B cell (primary cell): ENCODE measurements at regions of chr6 and their contacts with region 1.

Region 1: GRCh38 chr6:135183532-135184440 is 2.7 kb downstream of the MYB start:
- DNase-seq: peak; percentile 78
- ATAC-seq: peak; percentile 37
- H3K4me3 ChIP-seq: peak overlapping the region; percentile 47 to 74 (median 67)
- H3K4me3 Mint-ChIP-seq: peak overlapping the region; percentile 86
- H3K27ac ChIP-seq: no peak overlapping the region
- H3K27ac Mint-ChIP-seq: peak overlapping the region; percentile 44
- H3K4me1 ChIP-seq: peaks cover 14 to 28% of the 10 kb centered on the region in 2 donors
- H3K4me1 Mint-ChIP-seq: peaks cover 20% of the 10 kb centered on the region
- H3K27me3 ChIP-seq: peaks cover 0 to 17% (median 1%) of the 10 kb centered on the region in 4 experiments
- H3K27me3 Mint-ChIP-seq: peaks cover 6% of the 10 kb centered on the region
- CTCF ChIP-seq: peak; percentile 62

Region 2: DNA sequence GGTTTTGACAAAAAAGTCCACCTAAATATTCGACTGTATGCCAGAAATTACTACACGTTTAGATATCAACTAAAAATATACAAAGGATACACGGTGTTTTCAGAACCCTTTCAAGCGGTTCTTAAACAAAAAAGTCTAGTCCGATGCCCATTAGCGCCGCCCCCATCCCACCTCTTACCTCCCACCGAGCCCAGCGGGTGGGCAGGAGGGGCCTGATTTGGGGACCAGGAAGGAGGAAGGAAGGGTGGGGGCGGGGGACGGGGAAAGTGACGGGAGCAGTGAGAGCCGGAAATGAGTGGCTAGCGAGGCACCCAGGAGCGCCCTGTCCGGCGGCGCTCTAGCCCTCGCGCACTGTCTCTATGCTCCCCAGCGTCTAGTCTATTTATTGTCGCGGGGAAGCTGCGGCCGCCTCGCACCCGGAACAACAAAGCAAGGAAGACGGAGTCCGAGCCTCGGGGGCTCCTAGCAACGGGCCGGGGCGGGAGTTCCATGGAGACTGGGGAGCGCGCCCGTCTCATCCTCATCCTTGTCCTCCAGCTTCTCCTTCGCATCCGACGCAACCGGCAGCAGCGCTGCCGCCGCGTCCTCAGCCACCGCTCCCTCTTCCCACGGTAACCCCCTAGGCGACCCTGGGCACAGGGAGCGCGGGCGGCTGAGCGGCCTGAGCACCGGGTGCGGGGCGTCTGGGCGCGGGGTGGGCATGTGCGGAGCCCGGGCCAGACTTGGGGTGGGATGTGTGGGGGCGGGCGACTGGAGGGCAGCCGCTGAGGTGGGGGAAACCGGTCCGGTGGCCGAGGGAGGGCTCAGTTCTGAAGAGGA is 1230.8 kb before region 1 on chr6 and contains the start of gene TBPL1:
- CTCF ChIA-PET with region 1: no interaction called
- POLR2A ChIA-PET with region 1: no interaction called
- intact Hi-C with region 1: loop called (anchors 5 kb)
- DNase-seq: peak; percentile 97
- ATAC-seq: peak; percentile 78
- H3K4me3 ChIP-seq: peak within 1 kb of the TSS; percentile 78 to 98 (median 94)
- H3K4me3 Mint-ChIP-seq: peak within 1 kb of the TSS; percentile 98
- H3K27ac ChIP-seq: peak within 1 kb of the TSS; percentile 83 to 89
- H3K27ac Mint-ChIP-seq: peak within 1 kb of the TSS; percentile 97
- H3K4me1 ChIP-seq: peaks cover 20 to 27% of the 10 kb centered on the region in 2 donors
- H3K4me1 Mint-ChIP-seq: peaks cover 48% of the 10 kb centered on the region
- H3K27me3 ChIP-seq: no peaks in the 10 kb centered on the region
- H3K27me3 Mint-ChIP-seq: no peaks in the 10 kb centered on the region
- CTCF ChIP-seq: no peak
- total RNA-seq, gene TBPL1: 26.9 and 29.6 TPM in 2 replicates

Region 3: DNA sequence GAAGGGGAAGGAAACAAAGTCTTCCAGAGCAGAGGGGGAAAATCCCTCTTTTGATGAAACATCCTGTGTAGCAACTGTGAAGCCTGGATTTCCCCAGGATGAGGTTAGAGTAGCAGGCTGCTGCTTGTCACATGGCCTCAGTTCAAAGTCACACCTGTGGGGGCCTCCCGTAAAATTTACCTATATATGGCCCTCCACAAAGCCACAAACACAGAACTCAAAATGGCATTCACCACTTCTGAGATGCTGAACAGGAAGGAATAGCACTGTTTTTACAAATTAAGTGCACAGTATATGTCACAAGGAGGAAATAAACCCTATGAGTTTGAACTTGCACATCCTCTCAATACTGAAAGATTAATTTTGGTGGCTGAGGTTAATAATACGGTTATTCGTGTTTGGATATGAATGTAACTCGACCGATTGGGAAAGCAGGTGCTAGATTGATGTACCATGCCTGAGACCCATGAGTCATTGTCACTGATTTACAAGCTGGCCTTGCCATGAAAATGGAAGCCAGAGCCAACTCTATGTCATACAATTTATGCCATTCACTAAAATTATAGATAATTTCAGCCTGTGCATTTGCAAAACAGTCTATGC is 936.5 kb before region 1 on chr6:
- CTCF ChIA-PET with region 1: no interaction called
- POLR2A ChIA-PET with region 1: no interaction called
- intact Hi-C with region 1: loop called (anchors 10 kb)
- DNase-seq: peak; percentile 94
- ATAC-seq: peak; percentile 80
- H3K4me3 ChIP-seq: peak overlapping the region in 1 of 5 experiments; percentile 41
- H3K4me3 Mint-ChIP-seq: peak overlapping the region; percentile 38
- H3K27ac ChIP-seq: peak overlapping the region; percentile 80 to 87
- H3K27ac Mint-ChIP-seq: peak overlapping the region; percentile 87
- H3K4me1 ChIP-seq: peaks cover 47 to 48% of the 10 kb centered on the region in 2 donors
- H3K4me1 Mint-ChIP-seq: peaks cover 41% of the 10 kb centered on the region
- H3K27me3 ChIP-seq: no peaks in the 10 kb centered on the region
- H3K27me3 Mint-ChIP-seq: no peaks in the 10 kb centered on the region
- CTCF ChIP-seq: no peak

Region 4: GRCh38 chr6:135145063-135145800 is 38.6 kb before region 1 on chr6:
- CTCF ChIA-PET with region 1: interaction called, 34 read pairs
- POLR2A ChIA-PET with region 1: no interaction called
- intact Hi-C with region 1: loop called (anchors 1 kb)
- DNase-seq: peak; percentile 48
- ATAC-seq: peak; percentile 53
- H3K4me3 ChIP-seq: peak overlapping the region in 3 of 5 experiments; percentile 20 to 37 (median 25)
- H3K4me3 Mint-ChIP-seq: peak overlapping the region; percentile 58
- H3K27ac ChIP-seq: no peak overlapping the region
- H3K27ac Mint-ChIP-seq: no peak overlapping the region
- H3K4me1 ChIP-seq: peaks cover 14 to 25% of the 10 kb centered on the region in 2 donors
- H3K4me1 Mint-ChIP-seq: peaks cover 39% of the 10 kb centered on the region
- H3K27me3 ChIP-seq: no peaks in the 10 kb centered on the region
- H3K27me3 Mint-ChIP-seq: no peaks in the 10 kb centered on the region
- CTCF ChIP-seq: peak; percentile 78

Region 5: GRCh38 chr6:135170849-135171248 is 12.9 kb before region 1 on chr6:
- CTCF ChIA-PET with region 1: interaction called, 4 read pairs
- POLR2A ChIA-PET with region 1: no interaction called
- intact Hi-C with region 1: loop called (anchors 1 kb)
- DNase-seq: no peak
- ATAC-seq: no peak
- H3K4me3 ChIP-seq: no peak overlapping the region
- H3K4me3 Mint-ChIP-seq: no peak overlapping the region
- H3K27ac ChIP-seq: no peak overlapping the region
- H3K27ac Mint-ChIP-seq: no peak overlapping the region
- H3K4me1 ChIP-seq: no peaks in the 10 kb centered on the region
- H3K4me1 Mint-ChIP-seq: no peaks in the 10 kb centered on the region
- H3K27me3 ChIP-seq: peaks cover 0 to 2% (median 0%) of the 10 kb centered on the region in 4 experiments
- H3K27me3 Mint-ChIP-seq: no peaks in the 10 kb centered on the region
- CTCF ChIP-seq: no peak

Region 6: DNA sequence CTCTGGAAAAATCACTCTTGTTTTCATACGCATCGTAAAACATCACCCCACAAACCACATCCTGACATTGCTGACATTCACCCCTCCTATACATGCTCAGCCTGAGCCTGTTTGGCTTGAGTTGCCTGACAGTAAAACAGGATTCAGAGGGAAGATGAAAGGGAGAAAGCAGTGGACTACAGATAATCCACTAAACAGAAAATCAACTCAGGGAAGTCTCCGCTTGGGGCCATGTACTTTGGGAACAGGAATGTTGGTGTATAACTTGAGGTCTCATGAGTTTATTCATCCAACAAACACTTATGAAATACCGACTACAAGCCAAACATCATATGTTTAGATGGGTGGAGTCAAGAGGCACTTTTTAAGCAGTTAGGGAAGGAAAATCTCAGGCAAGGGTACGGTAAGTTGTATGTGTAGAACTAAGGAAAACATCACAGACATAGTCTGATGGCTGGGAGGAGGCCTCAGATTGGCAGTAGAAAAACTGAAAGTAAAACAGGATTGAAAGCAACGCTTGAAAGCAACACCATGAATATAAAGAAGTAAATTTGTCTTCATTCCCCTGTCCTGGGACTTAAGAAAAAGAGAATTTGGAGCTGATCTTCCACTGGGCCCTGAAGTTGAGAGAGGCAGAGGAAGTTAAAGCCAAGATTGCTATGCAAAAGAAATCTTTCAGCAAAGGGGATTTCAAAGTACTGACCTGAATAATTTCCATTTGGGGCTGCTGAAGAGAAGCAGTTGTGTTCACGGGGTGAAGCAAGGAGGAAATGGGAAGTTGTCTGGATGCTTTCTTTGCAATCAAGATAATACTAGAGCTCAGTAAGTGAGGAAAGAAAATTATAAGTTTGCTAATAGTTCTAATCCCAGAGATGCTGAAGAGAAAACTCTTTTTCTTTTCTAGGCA is 696.5 kb after region 1 on chr6:
- CTCF ChIA-PET with region 1: no interaction called
- POLR2A ChIA-PET with region 1: no interaction called
- intact Hi-C with region 1: loop called (anchors 10 kb)
- DNase-seq: peak; percentile 75
- ATAC-seq: peak; percentile 90
- H3K4me3 ChIP-seq: peak overlapping the region; percentile 14 to 64 (median 36)
- H3K4me3 Mint-ChIP-seq: peak overlapping the region; percentile 84
- H3K27ac ChIP-seq: peak overlapping the region; percentile 91 to 99
- H3K27ac Mint-ChIP-seq: peak overlapping the region; percentile 98
- H3K4me1 ChIP-seq: peaks cover 35% of the 10 kb centered on the region in 2 donors
- H3K4me1 Mint-ChIP-seq: peaks cover 49% of the 10 kb centered on the region
- H3K27me3 ChIP-seq: no peaks in the 10 kb centered on the region
- H3K27me3 Mint-ChIP-seq: no peaks in the 10 kb centered on the region
- CTCF ChIP-seq: no peak